Thyroid gland (tissue), 4 donors: ENCODE measurements at regions of chr14 and their contacts with region 1.

Region 1: DNA sequence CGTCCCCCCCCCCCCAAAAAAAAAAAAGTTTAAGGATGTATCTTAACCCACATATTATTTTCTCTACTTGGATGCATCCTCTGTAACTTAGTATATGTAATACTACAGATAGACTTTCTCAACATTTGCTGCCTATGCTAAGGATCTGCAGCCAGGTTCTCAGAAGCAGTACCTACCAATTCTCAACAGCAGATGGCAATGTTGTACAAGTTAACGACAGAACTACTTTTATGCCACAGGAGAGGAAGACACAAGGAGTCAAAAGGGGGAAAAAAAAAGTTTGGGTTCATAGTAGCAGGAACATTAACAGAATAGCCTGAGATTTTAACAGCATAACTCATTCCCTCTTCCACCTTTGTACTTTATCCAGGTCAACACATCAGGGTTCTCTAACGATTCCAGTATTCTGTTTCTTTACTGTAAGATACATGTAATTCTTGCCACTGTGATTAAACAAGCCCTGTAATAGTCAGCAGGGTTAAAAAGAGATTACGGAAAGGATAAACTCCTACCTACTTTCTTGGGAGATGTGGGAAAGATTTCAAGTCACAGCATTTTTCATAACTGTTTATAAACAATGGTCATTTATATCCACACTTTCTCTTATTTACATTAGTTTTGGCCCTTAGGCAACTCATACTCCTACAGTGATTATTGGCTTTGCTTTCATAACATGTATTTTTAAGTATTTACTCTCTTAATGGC is 5.7 kb upstream of the NEK9 start:
- DNase-seq: peak; percentile 16 to 30
- H3K4me3 ChIP-seq: no peak overlapping the region
- H3K27ac ChIP-seq: peak overlapping the region in 1 of 3 donors; percentile 14
- H3K4me1 ChIP-seq: peaks cover 13 to 14% of the 10 kb centered on the region in 2 donors
- H3K27me3 ChIP-seq: no peaks in the 10 kb centered on the region
- CTCF ChIP-seq: peak; percentile 44 to 89 (median 77)
- POLR2A ChIP-seq: no peak

Region 2: GRCh38 chr14:75176142-75176820 is 43.7 kb after region 1 on chr14 and contains the start of gene TMED10:
- intact Hi-C with region 1: no loop called
- DNase-seq: peak; percentile 84 to 90
- H3K4me3 ChIP-seq: peak within 1 kb of the TSS; percentile 91 to 97 (median 96)
- H3K27ac ChIP-seq: peak within 1 kb of the TSS; percentile 92 to 97 (median 94)
- H3K4me1 ChIP-seq: peaks cover 19 to 29% of the 10 kb centered on the region in 2 donors
- H3K27me3 ChIP-seq: no peaks in the 10 kb centered on the region
- CTCF ChIP-seq: no peak
- POLR2A ChIP-seq: peak; percentile 41 to 81
- total RNA-seq, gene TMED10: 289 to 559 (median 388) TPM

Region 3: GRCh38 chr14:75307700-75308379 is 175.3 kb after region 1 on chr14:
- intact Hi-C with region 1: loop called (anchors 5 kb)
- DNase-seq: peak; percentile 83 to 88
- H3K4me3 ChIP-seq: no peak overlapping the region
- H3K27ac ChIP-seq: no peak overlapping the region
- H3K4me1 ChIP-seq: peaks cover 16 to 17% of the 10 kb centered on the region in 2 donors
- H3K27me3 ChIP-seq: no peaks in the 10 kb centered on the region
- CTCF ChIP-seq: peak; percentile 71 to 91 (median 86)
- POLR2A ChIP-seq: no peak